ENCODE measurements at regions of chr20 and their contacts with region 1.

Region 1: GRCh38 chr20:55415567-55416142 is 589.7 kb downstream of the CBLN4 start:
- DNase-seq: no peak
- H3K4me3 ChIP-seq: no peak overlapping the region
- H3K27ac ChIP-seq: no peak overlapping the region
- H3K27me3 ChIP-seq: peaks cover 0 to 3% (median 0%) of the 10 kb centered on the region in 45 donors
- CTCF ChIP-seq: peak in 55 of 56 donors; percentile 23 to 78 (median 53)

Region 2: DNA sequence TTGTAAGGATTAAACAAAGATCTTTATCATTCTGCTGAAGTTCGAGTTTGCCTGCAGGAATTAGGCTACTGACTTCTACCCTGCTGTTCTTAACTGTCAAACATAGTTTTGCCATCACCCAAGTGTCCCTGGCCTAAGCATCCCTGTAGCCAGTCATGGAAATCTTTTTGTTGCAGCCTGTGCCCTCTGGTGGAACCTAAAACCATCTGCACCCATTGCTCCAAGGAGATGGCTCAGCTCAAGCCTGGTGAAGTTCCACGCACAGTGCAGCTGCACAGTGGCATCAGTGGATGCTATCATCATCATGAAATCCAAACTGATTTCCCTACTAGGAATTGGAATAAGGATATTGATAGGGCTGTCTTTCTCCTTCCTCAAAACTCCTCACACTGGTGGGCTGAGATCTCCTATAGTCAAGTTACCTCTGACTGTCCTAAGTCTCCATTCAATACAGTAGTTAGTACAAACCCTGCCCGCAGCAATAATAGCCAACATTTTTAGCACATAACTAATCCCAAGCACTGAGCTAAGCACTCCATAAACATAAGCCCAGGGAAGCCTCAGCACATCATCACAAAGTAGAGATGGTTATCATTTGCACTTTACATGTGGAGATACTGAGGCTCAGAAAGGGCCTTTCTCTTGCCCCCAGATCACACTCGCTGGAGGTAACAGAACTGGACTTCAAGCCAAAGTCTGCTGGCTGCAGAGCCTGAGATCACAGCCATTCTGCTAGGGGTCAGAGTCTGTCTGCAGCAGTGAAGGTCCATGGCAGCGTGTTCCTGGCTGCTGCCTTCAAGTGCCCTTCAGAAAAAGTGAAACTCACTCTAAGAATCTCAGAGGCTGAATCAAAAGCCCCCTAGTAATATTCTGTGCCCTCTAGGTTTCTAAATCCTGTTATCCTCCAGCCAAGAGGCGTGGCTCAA is 755.7 kb after region 1 on chr20:
- intact Hi-C with region 1: loop called (anchors 5 to 10 kb)
- DNase-seq: peak in 8 of 10 donors; percentile 34 to 59 (median 52)
- H3K4me3 ChIP-seq: no peak overlapping the region
- H3K27ac ChIP-seq: no peak overlapping the region
- H3K27me3 ChIP-seq: peaks cover 0 to 24% (median 0%) of the 10 kb centered on the region in 45 donors
- CTCF ChIP-seq: peak; percentile 37 to 80 (median 68)

Measured in dorsolateral prefrontal cortex (tissue), 120 donors.